Naive thymus-derived CD4-positive, alpha-beta T cell (primary cell): ENCODE measurements at regions of chr9 and their contacts with region 1.

Region 1: DNA sequence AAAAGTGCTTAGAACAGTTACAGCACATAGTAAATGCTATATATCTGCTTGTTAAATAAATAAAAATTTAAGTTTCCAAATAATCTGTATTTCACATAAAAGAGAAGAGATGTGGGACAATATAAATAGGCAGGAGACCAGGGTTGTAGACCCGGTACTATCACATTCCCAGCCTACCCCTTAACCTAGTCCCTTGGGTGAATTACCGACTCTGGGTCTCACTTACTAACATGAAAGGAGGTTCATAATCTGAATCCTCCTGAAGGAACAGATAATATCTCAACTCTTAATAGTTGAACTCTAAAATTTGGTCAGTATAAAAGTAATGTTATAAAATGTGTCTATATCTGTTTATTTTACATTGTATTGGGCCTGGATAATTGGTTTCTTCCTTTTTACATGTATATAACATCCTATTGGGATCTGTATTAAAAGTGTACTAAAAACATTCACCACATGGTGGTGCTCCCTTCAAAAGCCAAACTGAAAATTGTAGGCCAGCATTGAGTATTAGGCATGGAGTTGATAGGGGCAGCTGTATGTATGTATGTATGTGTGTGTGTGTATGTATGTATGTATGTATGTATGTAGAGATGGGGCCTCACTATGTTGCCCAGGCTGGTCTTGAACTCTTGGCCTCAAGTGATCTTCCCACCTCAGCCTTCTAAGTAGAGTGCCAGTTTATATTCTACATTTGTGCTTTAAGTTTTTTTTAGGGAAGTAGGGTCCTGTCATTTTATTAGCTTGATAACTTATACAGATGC is 64.2 kb upstream of the ABL1 start:
- DNase-seq: peak in 7 of 9 donors; percentile 2 to 39 (median 22)
- ATAC-seq: peak; percentile 69
- H3K4me3 ChIP-seq: no peak overlapping the region
- H3K4me3 Mint-ChIP-seq: no peak overlapping the region
- H3K27ac ChIP-seq: no peak overlapping the region
- H3K27ac Mint-ChIP-seq: peak overlapping the region in 1 of 9 donors; percentile 3
- H3K4me1 ChIP-seq: peaks cover 0 to under 1% of the 10 kb centered on the region in 2 donors
- H3K4me1 Mint-ChIP-seq: peaks cover 12 to 53% (median 39%) of the 10 kb centered on the region in 7 donors
- H3K27me3 ChIP-seq: peaks cover 0 to 2% of the 10 kb centered on the region in 2 donors
- H3K27me3 Mint-ChIP-seq: no peaks in the 10 kb centered on the region

Region 2: DNA sequence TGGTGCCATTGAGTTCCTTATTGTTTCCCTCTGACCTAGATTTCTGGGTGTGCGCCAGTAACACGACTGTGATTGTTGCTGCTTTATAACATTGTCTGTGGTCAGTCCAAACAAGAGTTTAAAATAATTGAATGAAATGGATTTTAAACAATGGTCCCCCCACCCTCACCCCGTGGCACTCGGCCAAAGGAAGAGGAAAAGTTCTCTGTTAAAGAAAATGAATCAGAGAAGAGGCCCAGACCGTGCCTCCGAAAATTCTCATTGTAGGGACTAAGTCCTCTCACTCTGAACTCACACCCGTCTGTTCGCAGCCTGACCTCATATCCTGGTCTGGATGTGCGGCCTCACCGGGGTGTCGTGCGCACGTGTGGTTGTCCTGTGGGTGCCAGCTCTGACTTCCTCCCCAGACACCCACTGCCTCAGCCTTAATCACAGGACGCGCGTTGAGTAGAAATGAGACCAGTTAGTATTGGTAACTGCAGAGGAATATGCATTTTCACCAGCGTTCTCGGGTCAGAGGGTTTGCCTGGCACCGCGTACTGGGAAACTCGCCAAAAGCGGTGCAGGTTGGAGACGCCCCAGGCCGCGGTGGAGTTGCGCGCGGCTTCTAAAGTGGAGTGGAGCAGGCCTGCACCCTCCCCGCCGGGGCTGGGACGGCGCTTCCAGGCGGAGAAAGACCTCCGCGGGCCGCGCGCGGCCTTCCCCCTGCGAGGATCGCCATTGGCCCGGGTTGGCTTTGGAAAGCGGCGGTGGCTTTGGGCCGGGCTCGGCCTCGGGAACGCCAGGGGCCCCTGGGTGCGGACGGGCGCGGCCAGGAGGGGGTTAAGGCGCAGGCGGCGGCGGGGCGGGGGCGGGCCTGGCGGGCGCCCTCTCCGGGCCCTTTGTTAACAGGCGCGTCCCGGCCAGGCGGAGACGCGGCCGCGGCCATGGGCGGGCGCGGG is 63.8 kb after region 1 on chr9 and contains the start of gene ABL1:
- CTCF ChIA-PET with region 1: no interaction called
- POLR2A ChIA-PET with region 1: no interaction called
- intact Hi-C with region 1: loop called (anchors 1 kb)
- DNase-seq: peak; percentile 37 to 66 (median 52)
- ATAC-seq: peak; percentile 89
- H3K4me3 ChIP-seq: peak within 1 kb of the TSS; percentile 79
- H3K4me3 Mint-ChIP-seq: peak within 1 kb of the TSS; percentile 92 to 99 (median 96)
- H3K27ac ChIP-seq: peak within 1 kb of the TSS; percentile 27
- H3K27ac Mint-ChIP-seq: peak within 1 kb of the TSS; percentile 79 to 96 (median 92)
- H3K4me1 ChIP-seq: peaks cover 0 to 19% of the 10 kb centered on the region in 2 donors
- H3K4me1 Mint-ChIP-seq: peaks cover 20 to 62% (median 51%) of the 10 kb centered on the region in 7 donors
- H3K27me3 ChIP-seq: no peaks in the 10 kb centered on the region
- H3K27me3 Mint-ChIP-seq: peaks cover 0 to 37% (median 0%) of the 10 kb centered on the region in 5 donors
- total RNA-seq, gene ABL1: 32.1 to 41.0 (median 39.5) TPM

Region 3: GRCh38 chr9:130866474-130866965 is 95.7 kb after region 1 on chr9:
- CTCF ChIA-PET with region 1: interaction called, 6 read pairs
- POLR2A ChIA-PET with region 1: interaction called, 4 read pairs
- intact Hi-C with region 1: loop called (anchors 1 kb)
- DNase-seq: peak; percentile 8 to 54 (median 40)
- ATAC-seq: peak; percentile 56
- H3K4me3 ChIP-seq: no peak overlapping the region
- H3K4me3 Mint-ChIP-seq: no peak overlapping the region
- H3K27ac ChIP-seq: no peak overlapping the region
- H3K27ac Mint-ChIP-seq: no peak overlapping the region
- H3K4me1 ChIP-seq: no peaks in the 10 kb centered on the region
- H3K4me1 Mint-ChIP-seq: peaks cover 2 to 9% (median 5%) of the 10 kb centered on the region in 7 donors
- H3K27me3 ChIP-seq: no peaks in the 10 kb centered on the region
- H3K27me3 Mint-ChIP-seq: no peaks in the 10 kb centered on the region

Region 4: GRCh38 chr9:130940693-130941576 is 170.1 kb after region 1 on chr9:
- CTCF ChIA-PET with region 1: no interaction called
- POLR2A ChIA-PET with region 1: no interaction called
- intact Hi-C with region 1: loop called in 1 of 2 experiments (anchors 2 kb)
- DNase-seq: peak; percentile 30 to 78 (median 56)
- ATAC-seq: peak; percentile 83
- H3K4me3 ChIP-seq: no peak overlapping the region
- H3K4me3 Mint-ChIP-seq: peak overlapping the region in 8 of 10 donors; percentile 10 to 62 (median 52)
- H3K27ac ChIP-seq: no peak overlapping the region
- H3K27ac Mint-ChIP-seq: peak overlapping the region in 1 of 9 donors; percentile 52
- H3K4me1 ChIP-seq: no peaks in the 10 kb centered on the region
- H3K4me1 Mint-ChIP-seq: peaks cover 0 to 15% (median 10%) of the 10 kb centered on the region in 7 donors
- H3K27me3 ChIP-seq: peaks cover 0 to 2% of the 10 kb centered on the region in 2 donors
- H3K27me3 Mint-ChIP-seq: peaks cover 34 to 71% (median 58%) of the 10 kb centered on the region in 5 donors

Region 5: GRCh38 chr9:131478421-131478868 is 707.6 kb after region 1 on chr9:
- CTCF ChIA-PET with region 1: no interaction called
- POLR2A ChIA-PET with region 1: no interaction called
- intact Hi-C with region 1: no loop called
- DNase-seq: peak; percentile 19 to 65 (median 51)
- ATAC-seq: peak; percentile 61
- H3K4me3 ChIP-seq: no peak overlapping the region
- H3K4me3 Mint-ChIP-seq: no peak overlapping the region
- H3K27ac ChIP-seq: no peak overlapping the region
- H3K27ac Mint-ChIP-seq: peak overlapping the region in 6 of 9 donors; percentile 11 to 87 (median 64)
- H3K4me1 ChIP-seq: no peaks in the 10 kb centered on the region
- H3K4me1 Mint-ChIP-seq: peaks cover 0 to 8% (median 3%) of the 10 kb centered on the region in 7 donors
- H3K27me3 ChIP-seq: no peaks in the 10 kb centered on the region
- H3K27me3 Mint-ChIP-seq: no peaks in the 10 kb centered on the region